ENCODE measurements at regions of chr3 and their contacts with region 1.

Region 1: GRCh38 chr3:158727206-158728060 is 4.8 kb downstream of the RARRES1 start:
- DNase-seq: peak; percentile 80
- H3K4me3 ChIP-seq: no peak overlapping the region
- H3K27ac ChIP-seq: no peak overlapping the region
- H3K4me1 ChIP-seq: peaks cover 39% of the 10 kb centered on the region
- H3K27me3 ChIP-seq: no peaks in the 10 kb centered on the region
- CTCF ChIP-seq: peak; percentile 58 to 72
- POLR2A ChIP-seq: no peak

Region 2: DNA sequence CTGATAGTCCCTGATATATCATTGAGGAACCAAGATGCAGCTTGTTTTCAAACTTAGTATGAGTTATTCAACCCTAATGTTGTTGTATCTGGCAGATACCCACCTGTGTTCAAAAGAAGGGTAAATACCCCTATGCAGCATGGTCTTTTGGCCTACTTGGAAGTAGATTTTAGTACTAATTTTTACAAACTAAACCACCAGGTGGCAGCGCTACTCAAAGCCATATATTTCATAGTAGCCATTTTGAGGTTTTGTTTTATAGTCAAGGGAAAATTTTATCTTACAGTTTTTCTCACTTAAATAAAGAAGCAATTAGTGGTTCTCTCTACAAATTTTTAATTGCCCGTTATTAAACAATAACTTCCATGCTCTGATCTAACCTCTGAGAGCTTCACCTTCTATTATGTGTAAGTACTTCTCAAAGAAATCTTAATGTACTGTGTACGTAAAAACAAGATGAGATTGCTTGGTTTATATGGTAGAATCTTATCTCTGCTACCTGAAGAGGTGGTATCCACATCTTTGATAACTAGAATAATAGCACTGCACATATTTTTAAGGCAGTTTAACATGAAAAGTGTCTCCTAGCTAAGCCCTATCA is 187.9 kb before region 1 on chr3:
- CTCF ChIA-PET with region 1: interaction called, 6 read pairs
- POLR2A ChIA-PET with region 1: no interaction called
- dilution Hi-C with region 1: no loop called
- intact Hi-C with region 1: loop called (anchors 2 kb)
- DNase-seq: peak; percentile 70
- H3K4me3 ChIP-seq: no peak overlapping the region
- H3K27ac ChIP-seq: no peak overlapping the region
- H3K4me1 ChIP-seq: no peaks in the 10 kb centered on the region
- H3K27me3 ChIP-seq: no peaks in the 10 kb centered on the region
- CTCF ChIP-seq: peak; percentile 37 to 41
- POLR2A ChIP-seq: no peak

Region 3: GRCh38 chr3:158659454-158660237 is 67.8 kb before region 1 on chr3:
- CTCF ChIA-PET with region 1: interaction called, 91 read pairs
- POLR2A ChIA-PET with region 1: no interaction called
- dilution Hi-C with region 1: no loop called
- intact Hi-C with region 1: loop called (anchors 1 kb)
- DNase-seq: peak; percentile 95
- H3K4me3 ChIP-seq: no peak overlapping the region
- H3K27ac ChIP-seq: peak overlapping the region; percentile 95
- H3K4me1 ChIP-seq: peaks cover 28% of the 10 kb centered on the region
- H3K27me3 ChIP-seq: no peaks in the 10 kb centered on the region
- CTCF ChIP-seq: peak; percentile 75 to 77
- POLR2A ChIP-seq: no peak

Region 4: GRCh38 chr3:158696618-158697017 is 30.8 kb before region 1 on chr3:
- CTCF ChIA-PET with region 1: interaction called, 36 read pairs
- POLR2A ChIA-PET with region 1: interaction called, 3 read pairs
- dilution Hi-C with region 1: no loop called
- intact Hi-C with region 1: no loop called
- DNase-seq: peak; percentile 33
- H3K4me3 ChIP-seq: no peak overlapping the region
- H3K27ac ChIP-seq: no peak overlapping the region
- H3K4me1 ChIP-seq: peaks cover 33% of the 10 kb centered on the region
- H3K27me3 ChIP-seq: no peaks in the 10 kb centered on the region
- CTCF ChIP-seq: no peak
- POLR2A ChIP-seq: no peak

Region 5: DNA sequence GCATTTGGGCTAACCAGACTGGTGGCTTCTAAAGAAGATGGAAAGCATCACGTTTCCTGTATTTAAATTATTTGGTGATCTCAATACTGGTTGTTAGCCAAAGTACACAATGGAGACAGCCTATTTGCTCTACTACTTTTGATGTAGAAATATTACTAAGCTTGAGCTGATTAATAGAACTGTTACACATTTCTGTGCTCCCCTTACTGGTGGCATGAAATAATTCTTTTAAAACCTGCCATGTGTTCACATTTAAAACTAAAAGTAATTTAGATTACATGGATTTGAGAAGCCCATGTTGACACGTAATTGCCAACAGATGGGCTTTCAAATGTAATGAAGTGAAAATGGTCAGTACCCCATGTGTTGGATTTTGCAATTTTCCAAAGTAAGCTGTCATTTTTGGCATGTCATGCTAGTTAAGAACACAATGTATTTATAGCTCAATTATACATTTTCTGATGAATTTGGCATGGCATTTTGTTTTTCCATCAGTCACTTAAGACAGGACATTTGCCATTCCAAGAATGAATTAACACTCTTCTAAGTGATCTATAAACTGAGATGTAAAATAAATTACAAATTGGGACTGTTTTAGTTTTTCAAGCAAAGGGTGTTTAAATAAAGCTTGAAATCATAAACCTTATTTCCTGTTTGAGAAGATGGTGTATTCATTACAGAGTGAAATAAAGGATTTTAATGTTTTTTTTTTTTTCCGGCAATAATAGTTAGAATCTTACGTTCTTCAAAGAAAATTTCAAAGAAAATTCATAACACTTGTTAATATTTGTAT is 15.6 kb after region 1 on chr3:
- CTCF ChIA-PET with region 1: interaction called, 19 read pairs
- POLR2A ChIA-PET with region 1: no interaction called
- dilution Hi-C with region 1: no loop called
- intact Hi-C with region 1: no loop called
- DNase-seq: no peak
- H3K4me3 ChIP-seq: no peak overlapping the region
- H3K27ac ChIP-seq: no peak overlapping the region
- H3K4me1 ChIP-seq: no peaks in the 10 kb centered on the region
- H3K27me3 ChIP-seq: no peaks in the 10 kb centered on the region
- CTCF ChIP-seq: no peak
- POLR2A ChIP-seq: no peak

Region 6: GRCh38 chr3:158777161-158777873 is 49.9 kb after region 1 on chr3:
- CTCF ChIA-PET with region 1: interaction called, 11 read pairs
- POLR2A ChIA-PET with region 1: no interaction called
- dilution Hi-C with region 1: no loop called
- intact Hi-C with region 1: no loop called
- DNase-seq: no peak
- H3K4me3 ChIP-seq: no peak overlapping the region
- H3K27ac ChIP-seq: no peak overlapping the region
- H3K4me1 ChIP-seq: no peaks in the 10 kb centered on the region
- H3K27me3 ChIP-seq: no peaks in the 10 kb centered on the region
- CTCF ChIP-seq: no peak
- POLR2A ChIP-seq: no peak

Measured in endothelial cell of umbilical vein (primary cell).